ENCODE measurements at regions of chr3 and their contacts with region 1.

Region 1: GRCh38 chr3:128787256-128788240 is 61.6 kb downstream of the RAB7A start:
- DNase-seq: peak; percentile 44
- H3K4me3 Mint-ChIP-seq: peak overlapping the region; percentile 60
- H3K27ac Mint-ChIP-seq: peak overlapping the region; percentile 87
- H3K4me1 Mint-ChIP-seq: peaks cover 74% of the 10 kb centered on the region
- H3K27me3 Mint-ChIP-seq: no peaks in the 10 kb centered on the region

Region 2: DNA sequence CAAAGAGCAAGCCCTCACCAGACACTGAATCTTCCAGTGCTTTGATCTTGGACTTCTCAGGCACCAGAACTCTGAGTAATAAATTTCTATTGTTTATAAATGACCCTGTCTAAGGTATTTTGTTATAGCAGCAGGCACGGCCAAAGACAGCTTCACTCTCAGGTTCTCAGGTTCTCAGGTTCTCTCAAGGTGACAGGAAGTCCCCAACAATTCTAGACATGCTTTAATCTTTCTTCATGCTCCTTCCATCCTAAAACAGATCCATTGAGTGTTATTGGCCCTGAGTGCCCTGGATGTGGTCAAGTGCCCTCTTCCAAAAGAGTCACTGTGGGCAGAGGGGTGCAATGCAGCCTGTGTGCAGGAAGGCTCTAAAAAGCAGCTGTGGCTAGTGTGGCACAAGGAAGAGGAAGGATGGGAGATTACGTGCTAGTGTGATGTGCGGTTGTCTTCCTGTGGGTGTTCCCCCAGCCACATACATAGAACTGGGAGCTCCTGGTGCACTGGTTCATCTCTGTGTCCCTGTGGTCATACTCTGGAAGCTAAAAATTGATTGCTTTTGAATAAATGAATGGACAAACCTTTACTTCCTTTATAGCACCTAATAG is 72.6 kb before region 1 on chr3:
- CTCF ChIA-PET with region 1: interaction called, 3 read pairs
- POLR2A ChIA-PET with region 1: interaction called, 11 read pairs
- DNase-seq: peak; percentile 55
- H3K4me3 Mint-ChIP-seq: peak overlapping the region; percentile 48
- H3K27ac Mint-ChIP-seq: peak overlapping the region; percentile 84
- H3K4me1 Mint-ChIP-seq: peaks cover 28% of the 10 kb centered on the region
- H3K27me3 Mint-ChIP-seq: peaks cover 3% of the 10 kb centered on the region

Region 3: GRCh38 chr3:128804017-128804810 is 16.7 kb after region 1 on chr3:
- CTCF ChIA-PET with region 1: interaction called, 20 read pairs
- POLR2A ChIA-PET with region 1: interaction called, 28 read pairs
- DNase-seq: peak; percentile 70
- H3K4me3 Mint-ChIP-seq: peak overlapping the region; percentile 70
- H3K27ac Mint-ChIP-seq: peak overlapping the region; percentile 93
- H3K4me1 Mint-ChIP-seq: peaks cover 69% of the 10 kb centered on the region
- H3K27me3 Mint-ChIP-seq: no peaks in the 10 kb centered on the region

Measured in activated CD4-positive, alpha-beta memory T cell treated with anti-CD3 and anti-CD28 coated beads, Interleukin-2, amount 10 ng/mL, durations not matched to agents 7 days and 5 days (primary cell).